ENCODE measurements at regions of chr1 and their contacts with region 1.

Region 1: GRCh38 chr1:199163670-199164069 is 524.8 kb downstream of the PTPRC start:
- DNase-seq: no peak
- H3K4me3 ChIP-seq: no peak overlapping the region
- H3K27ac ChIP-seq: peak overlapping the region; percentile 100
- H3K4me1 ChIP-seq: peaks cover 54% of the 10 kb centered on the region
- H3K27me3 ChIP-seq: no peaks in the 10 kb centered on the region
- CTCF ChIP-seq: no peak

Region 2: DNA sequence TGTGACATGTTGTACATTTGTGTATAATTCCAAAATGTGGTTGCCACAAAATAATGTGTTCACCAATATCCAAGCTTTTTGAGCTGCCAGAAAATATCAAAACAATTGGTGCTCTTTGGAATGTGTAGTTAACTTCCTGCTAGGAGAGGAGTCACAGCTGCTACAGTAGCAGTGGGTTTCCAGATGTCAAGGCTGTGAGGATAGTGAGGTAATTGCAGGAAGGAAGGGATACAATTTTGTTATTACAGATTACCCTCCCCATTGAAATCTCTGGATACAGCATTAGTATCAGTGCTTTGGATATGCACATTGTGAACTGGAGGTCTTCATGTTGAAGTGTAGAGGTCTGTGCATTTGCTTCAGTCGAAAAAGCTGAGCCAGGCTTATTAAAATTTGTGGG is 271.6 kb before region 1 on chr1:
- CTCF ChIA-PET with region 1: no interaction called
- POLR2A ChIA-PET with region 1: no interaction called
- intact Hi-C with region 1: loop called (anchors 2 kb)
- DNase-seq: peak; percentile 97
- H3K4me3 ChIP-seq: peak overlapping the region; percentile 4
- H3K27ac ChIP-seq: peak overlapping the region; percentile 94
- H3K4me1 ChIP-seq: peaks cover 97% of the 10 kb centered on the region
- H3K27me3 ChIP-seq: no peaks in the 10 kb centered on the region
- CTCF ChIP-seq: no peak

Region 3: DNA sequence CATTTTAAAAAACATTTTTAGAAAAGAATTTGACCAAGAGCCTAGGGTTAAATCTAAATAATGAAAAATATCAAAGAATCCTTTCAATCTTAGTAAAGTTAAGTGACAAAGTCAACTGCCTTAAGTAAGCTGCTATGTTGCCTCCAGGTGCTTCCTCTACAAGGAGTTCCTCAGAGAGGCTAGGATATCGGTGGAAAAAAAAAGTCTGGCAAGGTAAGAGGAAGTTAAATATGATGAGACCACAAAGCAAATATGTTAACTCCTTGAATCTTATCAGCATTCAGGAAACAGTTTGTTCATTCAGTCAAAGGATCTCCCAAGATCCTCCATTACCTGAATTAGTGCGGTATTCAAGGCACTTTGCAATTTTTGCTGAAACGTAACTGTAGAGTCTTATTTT is 38.7 kb after region 1 on chr1:
- CTCF ChIA-PET with region 1: no interaction called
- POLR2A ChIA-PET with region 1: interaction called, 11 read pairs
- intact Hi-C with region 1: no loop called
- DNase-seq: no peak
- H3K4me3 ChIP-seq: no peak overlapping the region
- H3K27ac ChIP-seq: no peak overlapping the region
- H3K4me1 ChIP-seq: peaks cover 3% of the 10 kb centered on the region
- H3K27me3 ChIP-seq: no peaks in the 10 kb centered on the region
- CTCF ChIP-seq: no peak

Region 4: DNA sequence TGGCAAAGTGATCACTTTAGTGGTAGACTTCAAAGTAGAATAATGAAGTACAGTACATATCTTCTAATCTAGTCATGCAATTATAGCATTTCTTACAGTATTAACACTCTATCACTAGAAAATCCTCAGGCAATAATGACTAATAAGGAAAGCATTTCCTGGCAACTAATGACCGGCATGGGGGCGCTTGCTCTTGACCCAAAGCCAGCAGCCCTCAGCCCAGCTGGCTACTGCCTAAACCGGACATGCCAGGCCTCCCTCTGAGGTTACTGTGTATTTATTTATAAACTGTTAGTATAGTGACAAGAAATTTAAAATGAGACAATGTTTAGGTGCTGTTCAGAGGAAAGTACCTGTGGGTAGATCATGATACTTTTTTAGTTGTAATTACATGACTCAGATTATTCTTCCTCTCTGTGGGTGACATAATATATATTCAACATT is 109.0 kb after region 1 on chr1:
- CTCF ChIA-PET with region 1: no interaction called
- POLR2A ChIA-PET with region 1: no interaction called
- intact Hi-C with region 1: loop called (anchors 1 kb)
- DNase-seq: peak; percentile 91
- H3K4me3 ChIP-seq: no peak overlapping the region
- H3K27ac ChIP-seq: peak overlapping the region; percentile 78
- H3K4me1 ChIP-seq: peaks cover 24% of the 10 kb centered on the region
- H3K27me3 ChIP-seq: no peaks in the 10 kb centered on the region
- CTCF ChIP-seq: no peak

Region 5: DNA sequence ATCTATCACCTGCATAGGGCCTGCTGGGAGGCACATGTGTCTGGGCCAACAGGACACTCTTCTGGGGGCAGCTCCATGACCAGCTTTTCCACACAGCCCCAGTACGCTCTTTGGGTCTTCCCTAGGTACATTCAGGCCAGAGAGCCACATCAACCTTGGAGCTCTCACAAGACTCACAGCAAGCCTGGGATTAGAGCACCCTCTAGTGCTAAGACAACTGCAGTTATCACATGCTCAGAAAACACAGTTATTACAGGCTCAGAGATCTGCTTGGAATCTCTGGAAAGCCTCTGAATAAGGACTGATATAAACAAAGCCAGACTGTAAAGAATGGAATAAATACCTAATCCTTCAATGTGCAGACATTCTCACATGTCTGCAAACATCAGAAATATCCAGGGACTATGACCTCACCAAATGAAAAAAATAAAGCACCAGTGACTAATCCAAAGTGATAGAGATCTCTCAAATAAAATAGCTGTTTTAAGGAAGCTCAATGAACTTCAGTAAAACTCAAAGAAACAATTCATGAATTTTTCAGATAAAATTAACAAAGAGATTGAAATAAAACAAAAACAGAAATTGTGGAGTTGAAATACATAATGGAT is 300.0 kb after region 1 on chr1:
- CTCF ChIA-PET with region 1: interaction called, 4 read pairs
- POLR2A ChIA-PET with region 1: no interaction called
- intact Hi-C with region 1: loop called (anchors 1 kb)
- DNase-seq: peak; percentile 92
- H3K4me3 ChIP-seq: no peak overlapping the region
- H3K27ac ChIP-seq: peak overlapping the region; percentile 46
- H3K4me1 ChIP-seq: peaks cover 9% of the 10 kb centered on the region
- H3K27me3 ChIP-seq: no peaks in the 10 kb centered on the region
- CTCF ChIP-seq: peak; percentile 73

Measured in A673 (cell line).